ENCODE measurements at regions of chr1 and their contacts with region 1.

Region 1: DNA sequence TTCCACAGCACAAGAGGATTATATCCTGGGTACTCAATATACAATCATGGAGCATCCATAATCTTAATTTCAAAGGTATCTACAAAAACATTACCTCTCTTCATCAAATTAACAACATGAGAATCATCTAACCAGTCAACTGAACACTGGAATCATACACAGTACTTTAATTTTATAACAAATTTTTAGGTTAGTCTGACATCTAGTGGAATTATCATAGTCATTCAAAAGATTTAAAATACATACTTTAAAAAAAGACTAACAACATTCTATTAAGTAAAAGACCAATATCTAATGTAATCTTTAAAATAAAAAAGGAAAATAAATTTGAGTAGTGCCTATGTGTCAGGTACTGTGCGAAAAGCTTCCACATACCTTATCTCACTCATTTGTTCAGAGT is 16.8 kb upstream of the SH3GLB1 start:
- DNase-seq: no peak
- ATAC-seq: no peak

Region 2: DNA sequence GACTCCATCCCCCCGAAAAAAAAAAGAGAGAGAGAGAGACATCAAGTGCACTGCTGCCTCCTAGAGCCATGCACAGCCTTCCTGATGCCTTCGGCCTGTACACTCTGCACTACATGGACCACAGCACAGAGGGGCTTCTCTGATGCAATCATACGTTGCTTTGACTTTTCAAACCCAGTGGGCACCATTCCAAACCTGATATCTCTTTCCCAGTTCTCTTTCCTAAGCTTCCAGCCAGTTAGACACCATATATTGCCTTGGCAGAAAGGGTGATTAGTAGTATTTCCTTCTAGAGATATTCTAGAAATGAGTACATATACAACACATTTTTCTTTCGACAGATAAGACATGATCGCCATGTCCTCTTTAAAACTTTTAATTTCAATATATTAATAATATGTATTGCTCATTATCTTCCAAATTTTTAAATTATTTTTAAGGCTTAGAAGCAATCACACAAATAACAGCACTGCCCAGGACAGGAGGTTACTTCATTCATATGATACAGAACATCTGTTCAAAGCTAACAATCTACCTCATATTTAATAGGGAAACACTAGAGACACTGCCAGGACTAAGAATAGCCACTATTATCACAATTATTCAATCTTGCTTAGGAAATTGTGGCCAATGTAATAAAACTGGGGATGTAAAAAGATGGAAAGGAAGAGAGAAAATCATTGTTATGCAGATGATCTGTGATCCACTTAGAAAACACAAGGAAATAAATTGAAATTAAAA is 209.0 kb before region 1 on chr1:
- intact Hi-C with region 1: loop called in 1 of 2 experiments (anchors 5 kb)
- DNase-seq: no peak
- ATAC-seq: no peak

Region 3: GRCh38 chr1:86822459-86822858 is 134.9 kb after region 1 on chr1:
- intact Hi-C with region 1: no loop called
- DNase-seq: no peak
- ATAC-seq: no peak

Measured in left cardiac atrium (tissue), 4 donors.